ENCODE measurements at regions of chr17 and their contacts with region 1.

Region 1: DNA sequence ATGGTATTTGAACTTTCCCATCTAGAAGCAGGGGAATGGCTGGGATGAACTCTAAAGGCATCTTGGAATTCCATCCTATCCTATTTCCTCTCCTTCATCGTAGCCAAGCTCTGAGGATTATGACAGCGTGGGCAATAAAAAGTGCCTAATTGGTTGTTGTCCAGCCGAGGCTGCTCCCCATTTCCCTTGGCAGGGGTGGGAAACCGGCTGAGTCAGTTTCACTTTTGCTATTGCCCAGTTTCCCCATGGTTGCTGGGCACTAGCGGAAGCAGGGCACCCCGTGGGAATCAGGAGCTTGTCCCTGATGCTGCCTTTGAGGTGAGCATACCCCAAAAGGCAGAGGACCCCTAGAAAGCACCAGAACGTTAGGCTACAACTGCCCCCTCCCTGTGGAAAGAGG is 13.8 kb upstream of the SP2 start:
- DNase-seq: peak in 1 of 5 donors; percentile 51
- ATAC-seq: peak in 1 of 4 donors; percentile 56
- H3K4me3 ChIP-seq: peak overlapping the region in 2 of 12 donors; percentile 7 to 12
- H3K27ac ChIP-seq: peak overlapping the region in 6 of 12 donors; percentile 1 to 38 (median 10)
- H3K4me1 ChIP-seq: peaks cover 0 to 29% (median 3%) of the 10 kb centered on the region in 12 donors
- H3K27me3 ChIP-seq: peaks cover 0 to 11% (median 7%) of the 10 kb centered on the region in 9 donors
- CTCF ChIP-seq: no peak
- POLR2A ChIP-seq: no peak

Region 2: GRCh38 chr17:47733047-47733673 is 149.1 kb before region 1 on chr17 and contains the start of gene TBX21:
- intact Hi-C with region 1: no loop called
- DNase-seq: peak; percentile 54 to 85 (median 66)
- ATAC-seq: peak in 3 of 4 donors; percentile 75 to 84 (median 77)
- H3K4me3 ChIP-seq: peak within 1 kb of the TSS; percentile 23 to 62 (median 48)
- H3K27ac ChIP-seq: peak within 1 kb of the TSS in 1 of 12 donors; percentile 71
- H3K4me1 ChIP-seq: peaks cover 0 to 19% (median 8%) of the 10 kb centered on the region in 12 donors
- H3K27me3 ChIP-seq: peaks cover 12 to 65% (median 40%) of the 10 kb centered on the region in 9 donors
- CTCF ChIP-seq: peak in 5 of 12 donors; percentile 7 to 38 (median 27)
- POLR2A ChIP-seq: no peak
- total RNA-seq, gene TBX21: 0.09 to 3.2 (median 0.28) TPM in 7 of 9 donors, not detected in the others

Region 3: GRCh38 chr17:47850692-47851573 is 31.3 kb before region 1 on chr17 and contains the start of gene SP6:
- intact Hi-C with region 1: loop called in 2 of 10 experiments (anchors 1 to 2 kb)
- DNase-seq: peak in 4 of 5 donors; percentile 40 to 65 (median 50)
- ATAC-seq: peak; percentile 33 to 91 (median 86)
- H3K4me3 ChIP-seq: peak within 1 kb of the TSS in 11 of 12 donors; percentile 31 to 55 (median 47)
- H3K27ac ChIP-seq: no peak within 1 kb of the TSS
- H3K4me1 ChIP-seq: peaks cover 4 to 32% (median 12%) of the 10 kb centered on the region in 12 donors
- H3K27me3 ChIP-seq: peaks cover 30 to 99% (median 79%) of the 10 kb centered on the region in 9 donors
- CTCF ChIP-seq: peak in 7 of 12 donors; percentile 12 to 49 (median 31)
- POLR2A ChIP-seq: peak in 1 of 2 donors; percentile 36
- total RNA-seq, gene SP6: 0.12 to 0.88 (median 0.32) TPM in 7 of 9 donors, not detected in the others